Common myeloid progenitor, CD34-positive (primary cell): ENCODE measurements at regions of chr10 and their contacts with region 1.

Region 1: GRCh38 chr10:103481974-103482531 is 3.0 kb upstream of the CALHM3 start:
- DNase-seq: peak; percentile 84 to 90 (median 86)
- H3K4me3 ChIP-seq: no peak overlapping the region
- H3K27ac ChIP-seq: no peak overlapping the region
- H3K4me1 ChIP-seq: peaks cover 0 to 7% (median 0%) of the 10 kb centered on the region in 4 experiments
- H3K27me3 ChIP-seq: no peaks in the 10 kb centered on the region

Region 2: GRCh38 chr10:103416436-103417147 is 65.5 kb before region 1 on chr10:
- CTCF ChIA-PET with region 1: interaction called, 157 read pairs
- POLR2A ChIA-PET with region 1: no interaction called
- DNase-seq: peak; percentile 74 to 88 (median 78)
- H3K4me3 ChIP-seq: no peak overlapping the region
- H3K27ac ChIP-seq: no peak overlapping the region
- H3K4me1 ChIP-seq: no peaks in the 10 kb centered on the region
- H3K27me3 ChIP-seq: no peaks in the 10 kb centered on the region

Region 3: GRCh38 chr10:103423748-103424147 is 58.3 kb before region 1 on chr10:
- CTCF ChIA-PET with region 1: interaction called, 157 read pairs
- POLR2A ChIA-PET with region 1: no interaction called
- DNase-seq: no peak
- H3K4me3 ChIP-seq: no peak overlapping the region
- H3K27ac ChIP-seq: no peak overlapping the region
- H3K4me1 ChIP-seq: peaks cover 0 to 3% (median under 1%) of the 10 kb centered on the region in 4 experiments
- H3K27me3 ChIP-seq: no peaks in the 10 kb centered on the region

Region 4: DNA sequence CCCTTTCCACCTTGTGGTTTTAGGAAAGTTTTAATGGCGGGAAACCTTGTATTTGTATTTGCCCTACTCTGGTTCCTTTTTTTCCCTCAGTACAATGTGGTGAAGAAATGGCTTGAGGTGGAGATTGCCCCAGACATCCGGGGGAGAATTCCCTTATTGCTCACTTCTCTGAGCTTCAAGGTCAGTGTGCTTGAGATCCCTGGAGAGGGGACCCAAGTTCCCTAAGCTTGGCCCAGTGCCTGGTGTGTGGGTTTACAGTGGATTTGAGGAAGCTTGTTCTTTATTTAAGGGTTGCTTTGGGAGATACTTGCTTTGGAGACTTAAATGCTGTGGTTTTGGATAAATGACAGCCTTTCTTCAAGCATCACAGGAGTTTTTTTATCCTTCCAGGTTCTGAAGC is 48.2 kb before region 1 on chr10:
- CTCF ChIA-PET with region 1: interaction called, 10 read pairs
- POLR2A ChIA-PET with region 1: no interaction called
- DNase-seq: no peak
- H3K4me3 ChIP-seq: no peak overlapping the region
- H3K27ac ChIP-seq: no peak overlapping the region
- H3K4me1 ChIP-seq: peaks cover 0 to 9% (median 2%) of the 10 kb centered on the region in 4 experiments
- H3K27me3 ChIP-seq: no peaks in the 10 kb centered on the region

Region 5: DNA sequence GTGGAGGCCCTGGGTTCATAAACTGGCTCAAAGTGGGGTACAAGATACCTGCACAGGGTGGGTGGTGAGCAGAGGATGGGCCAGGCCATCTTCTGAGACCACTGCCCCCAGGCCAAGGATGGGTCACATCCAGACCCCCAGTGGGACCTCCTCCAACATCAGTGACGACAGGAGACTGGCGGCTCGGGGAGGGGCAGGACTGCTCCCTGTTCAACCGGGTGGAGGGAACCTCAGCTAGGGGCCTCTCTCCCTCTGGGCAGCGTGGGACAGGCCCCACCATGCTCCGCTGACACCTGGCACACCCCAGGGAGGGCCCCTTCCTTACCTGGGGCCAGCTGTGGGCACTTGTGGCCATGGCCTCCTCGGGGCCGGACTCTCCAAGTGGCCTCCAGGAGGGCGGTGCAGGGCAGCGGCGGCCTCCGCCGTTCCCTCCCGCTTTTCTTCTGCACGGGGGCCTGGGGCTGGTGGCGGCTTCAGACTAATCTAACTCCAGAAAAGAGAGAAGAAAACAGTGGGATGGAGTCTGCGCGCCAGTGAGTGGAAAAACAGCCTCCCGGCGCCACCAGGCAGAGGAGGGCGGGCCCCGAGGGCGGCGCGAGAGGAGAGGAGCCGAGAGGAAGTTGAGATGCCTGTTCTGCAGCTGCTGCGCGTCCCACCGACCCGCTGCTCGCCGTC is 30.1 kb before region 1 on chr10 and contains the start of gene CALHM2:
- CTCF ChIA-PET with region 1: interaction called, 76 read pairs
- POLR2A ChIA-PET with region 1: no interaction called
- DNase-seq: peak; percentile 36 to 71 (median 61)
- H3K4me3 ChIP-seq: peak within 1 kb of the TSS; percentile 61 to 92 (median 72)
- H3K27ac ChIP-seq: peak within 1 kb of the TSS in 1 of 2 experiments; percentile 2
- H3K4me1 ChIP-seq: peaks cover 0 to 38% (median 32%) of the 10 kb centered on the region in 4 experiments
- H3K27me3 ChIP-seq: peaks cover 0 to 2% (median 0%) of the 10 kb centered on the region in 5 experiments